Ovary (tissue), 10 donors: ENCODE measurements at regions of chr10 and their contacts with region 1.

Region 1: GRCh38 chr10:106089855-106090254 is 1074.7 kb downstream of the SORCS1 start:
- DNase-seq: no peak
- H3K4me3 ChIP-seq: no peak overlapping the region
- H3K27ac ChIP-seq: no peak overlapping the region
- H3K4me1 ChIP-seq: no peaks in the 10 kb centered on the region
- H3K27me3 ChIP-seq: no peaks in the 10 kb centered on the region
- CTCF ChIP-seq: no peak
- EP300 ChIP-seq: no peak
- POLR2A ChIP-seq: no peak

Region 2: GRCh38 chr10:106147021-106147420 is 57.2 kb after region 1 on chr10:
- intact Hi-C with region 1: loop called in 1 of 4 experiments (anchors 5 kb)
- DNase-seq: no peak
- H3K4me3 ChIP-seq: no peak overlapping the region
- H3K27ac ChIP-seq: no peak overlapping the region
- H3K4me1 ChIP-seq: no peaks in the 10 kb centered on the region
- H3K27me3 ChIP-seq: no peaks in the 10 kb centered on the region
- CTCF ChIP-seq: no peak
- EP300 ChIP-seq: no peak
- POLR2A ChIP-seq: no peak